GM12878 (cell line): ENCODE measurements at regions of chr10 and their contacts with region 1.

Region 1: GRCh38 chr10:62816331-62817120 is at the start of gene EGR2:
- DNase-seq: peak; percentile 92
- ATAC-seq: peak; percentile 78
- H3K4me3 ChIP-seq: peak within 1 kb of the TSS; percentile 72
- H3K27ac ChIP-seq: peak within 1 kb of the TSS; percentile 72
- H3K4me1 ChIP-seq: peaks cover 19% of the 10 kb centered on the region
- H3K27me3 ChIP-seq: peaks cover 1 to 8% of the 10 kb centered on the region in 2 experiments; a peak in 3 of 4 replicates
- CTCF ChIP-seq: no peak
- EP300 ChIP-seq: peak in 1 of 2 experiments; percentile 56; a peak in 3 of 4 replicates
- POLR2A ChIP-seq: peak; percentile 44
- RAD21 ChIP-seq: no peak
- polyA plus RNA-seq, gene EGR2: 8.3 to 14.0 TPM

Region 2: DNA sequence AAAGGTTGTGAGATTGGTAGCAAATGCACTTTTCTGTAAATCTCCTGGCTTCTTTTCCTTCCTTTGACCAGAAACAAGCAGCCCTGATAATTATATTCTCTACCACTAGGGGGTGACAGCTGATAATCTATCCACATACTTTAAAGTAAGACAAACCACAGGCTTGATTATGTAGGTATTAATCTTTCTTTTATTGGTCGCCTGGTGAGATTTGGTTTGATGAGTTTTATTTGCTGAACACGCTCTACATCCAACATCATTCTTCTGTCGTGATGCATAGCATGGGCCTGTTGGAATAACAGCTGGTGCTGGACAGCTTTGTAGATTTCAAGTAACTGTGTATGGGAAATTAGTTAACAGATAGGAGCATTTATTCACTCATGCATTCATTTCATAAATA is 378.8 kb before region 1 on chr10:
- CTCF ChIA-PET with region 1: interaction called, 9 read pairs
- POLR2A ChIA-PET with region 1: no interaction called
- RAD21 ChIA-PET with region 1: interaction called, 6 read pairs
- SMC1A ChIA-PET with region 1: no interaction called
- in situ Hi-C with region 1: no loop called
- intact Hi-C with region 1: loop called (anchors 5 kb)
- DNase-seq: no peak
- ATAC-seq: peak; percentile 81
- H3K4me3 ChIP-seq: no peak overlapping the region
- H3K27ac ChIP-seq: no peak overlapping the region
- H3K4me1 ChIP-seq: peaks cover 6% of the 10 kb centered on the region; the same call in 1 of the 2 replicates
- H3K27me3 ChIP-seq: no peaks in the 10 kb centered on the region; a peak in 1 of 4 replicates
- CTCF ChIP-seq: peak; percentile 54 to 77 (median 68); a peak in 5 of 6 replicates
- EP300 ChIP-seq: no peak
- POLR2A ChIP-seq: no peak
- RAD21 ChIP-seq: peak; percentile 94

Region 3: GRCh38 chr10:62502995-62503613 is 313.4 kb before region 1 on chr10:
- CTCF ChIA-PET with region 1: no interaction called
- POLR2A ChIA-PET with region 1: no interaction called
- RAD21 ChIA-PET with region 1: no interaction called
- SMC1A ChIA-PET with region 1: no interaction called
- in situ Hi-C with region 1: no loop called
- intact Hi-C with region 1: no loop called
- DNase-seq: no peak
- ATAC-seq: no peak
- H3K4me3 ChIP-seq: no peak overlapping the region
- H3K27ac ChIP-seq: no peak overlapping the region
- H3K4me1 ChIP-seq: no peaks in the 10 kb centered on the region
- H3K27me3 ChIP-seq: peaks cover 2 to 8% of the 10 kb centered on the region in 2 experiments; a peak in 2 of 4 replicates
- CTCF ChIP-seq: no peak
- EP300 ChIP-seq: no peak
- POLR2A ChIP-seq: no peak
- RAD21 ChIP-seq: no peak

Region 4: GRCh38 chr10:62610649-62611229 is 205.8 kb before region 1 on chr10:
- CTCF ChIA-PET with region 1: interaction called, 123 read pairs
- POLR2A ChIA-PET with region 1: interaction called, 12 read pairs
- RAD21 ChIA-PET with region 1: interaction called, 132 read pairs
- SMC1A ChIA-PET with region 1: interaction called, 131 read pairs
- in situ Hi-C with region 1: loop called (anchors 5 kb)
- intact Hi-C with region 1: loop called (anchors 1 kb)
- DNase-seq: no peak
- ATAC-seq: peak; percentile 90
- H3K4me3 ChIP-seq: no peak overlapping the region
- H3K27ac ChIP-seq: no peak overlapping the region
- H3K4me1 ChIP-seq: peaks cover 30% of the 10 kb centered on the region
- H3K27me3 ChIP-seq: no peaks in the 10 kb centered on the region
- CTCF ChIP-seq: peak; percentile 90 to 99 (median 96)
- EP300 ChIP-seq: 0 out of 4 replicates have a peak, but pooled peaks have one; percentile 7 to 30
- POLR2A ChIP-seq: no peak
- RAD21 ChIP-seq: peak; percentile 99

Region 5: DNA sequence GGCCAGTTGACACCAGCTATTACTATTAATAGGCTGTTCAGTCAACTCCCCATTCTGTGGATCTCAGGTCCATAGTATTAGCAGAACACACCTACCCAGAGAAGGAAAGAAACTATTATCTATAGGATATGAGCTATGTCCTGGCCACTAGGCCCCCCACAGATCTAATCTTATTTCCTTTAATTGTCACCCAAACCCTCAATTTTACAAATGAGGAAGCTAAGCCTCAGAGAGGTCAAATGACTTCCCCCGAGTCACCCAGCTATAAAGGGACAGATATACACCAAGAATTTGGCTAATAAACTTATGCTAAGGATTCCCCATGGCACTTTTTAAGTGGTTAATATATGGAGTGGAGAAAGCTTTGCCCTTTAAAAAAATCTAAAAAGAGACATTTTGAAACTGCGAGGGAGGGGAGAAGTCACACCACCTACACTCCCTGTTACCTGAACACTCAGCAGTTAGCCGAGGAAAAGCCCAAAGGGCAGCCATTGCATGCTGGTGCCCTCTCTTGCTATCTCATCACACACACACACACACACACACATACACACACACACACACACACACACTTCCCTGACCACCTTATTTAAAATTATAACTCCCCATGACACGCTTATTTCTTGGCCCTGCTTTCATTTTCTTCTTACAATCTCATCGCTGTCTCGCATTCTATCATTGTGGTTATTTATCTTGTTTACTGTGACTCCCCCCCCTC is 169.0 kb before region 1 on chr10:
- CTCF ChIA-PET with region 1: interaction called, 4 read pairs
- POLR2A ChIA-PET with region 1: interaction called, 3 read pairs
- RAD21 ChIA-PET with region 1: interaction called, 18 read pairs
- SMC1A ChIA-PET with region 1: interaction called, 5 read pairs
- in situ Hi-C with region 1: no loop called
- intact Hi-C with region 1: no loop called
- DNase-seq: no peak
- ATAC-seq: peak; percentile 59
- H3K4me3 ChIP-seq: no peak overlapping the region
- H3K27ac ChIP-seq: no peak overlapping the region
- H3K4me1 ChIP-seq: peaks cover 29% of the 10 kb centered on the region
- H3K27me3 ChIP-seq: no peaks in the 10 kb centered on the region
- CTCF ChIP-seq: no peak
- EP300 ChIP-seq: peak; percentile 29 to 40; a peak in 1 of 4 replicates
- POLR2A ChIP-seq: no peak
- RAD21 ChIP-seq: no peak

Region 6: DNA sequence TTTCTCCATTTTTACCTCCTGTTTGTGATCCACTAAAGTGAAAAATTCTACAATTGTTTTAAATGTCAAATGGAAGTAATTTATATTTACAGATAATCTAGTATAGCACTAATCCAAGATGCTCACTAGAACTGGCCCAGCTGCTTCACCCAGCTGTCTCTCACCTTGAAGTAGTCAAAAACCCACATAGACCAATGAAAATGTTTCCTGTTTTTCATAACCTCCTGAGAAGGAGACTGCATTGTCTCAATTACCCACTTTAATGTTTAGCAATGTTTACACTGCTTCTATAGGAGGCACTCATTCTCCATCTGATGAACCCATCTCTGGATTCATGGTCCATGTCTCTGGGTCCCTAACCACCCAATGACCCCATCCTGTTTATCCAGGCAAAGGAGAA is 68.1 kb before region 1 on chr10:
- CTCF ChIA-PET with region 1: no interaction called
- POLR2A ChIA-PET with region 1: interaction called, 4 read pairs
- RAD21 ChIA-PET with region 1: interaction called, 14 read pairs
- SMC1A ChIA-PET with region 1: interaction called, 5 read pairs
- in situ Hi-C with region 1: no loop called
- intact Hi-C with region 1: no loop called
- DNase-seq: no peak
- ATAC-seq: peak; percentile 45
- H3K4me3 ChIP-seq: no peak overlapping the region
- H3K27ac ChIP-seq: no peak overlapping the region
- H3K4me1 ChIP-seq: peaks cover 13% of the 10 kb centered on the region; the same call in 1 of the 2 replicates
- H3K27me3 ChIP-seq: no peaks in the 10 kb centered on the region
- CTCF ChIP-seq: no peak
- EP300 ChIP-seq: no peak
- POLR2A ChIP-seq: no peak
- RAD21 ChIP-seq: peak; percentile 37; the same call in 1 of the 2 replicates

Region 7: DNA sequence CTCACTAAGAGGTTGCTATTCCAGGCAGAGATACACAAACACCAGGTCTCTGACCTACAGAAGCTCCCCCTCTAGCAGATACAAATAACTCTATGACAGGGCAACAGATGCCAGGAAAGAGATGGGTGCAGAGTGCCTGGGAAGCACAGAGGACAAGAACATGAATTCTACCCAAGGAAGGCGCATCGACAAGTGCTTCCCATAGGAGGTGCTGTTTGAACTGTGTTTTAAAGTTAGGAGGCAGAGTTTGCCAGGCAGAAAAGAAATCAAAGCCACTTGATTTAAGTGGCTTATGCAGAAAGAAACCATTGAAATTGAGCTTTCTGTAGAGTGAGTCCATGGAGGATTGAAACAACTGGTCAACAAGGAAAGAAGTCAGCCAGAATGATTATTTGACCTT is 34.9 kb after region 1 on chr10:
- CTCF ChIA-PET with region 1: interaction called, 3 read pairs
- POLR2A ChIA-PET with region 1: interaction called, 4 read pairs
- RAD21 ChIA-PET with region 1: interaction called, 33 read pairs
- SMC1A ChIA-PET with region 1: interaction called, 5 read pairs
- in situ Hi-C with region 1: no loop called
- intact Hi-C with region 1: loop called (anchors 2 kb)
- DNase-seq: no peak
- ATAC-seq: no peak
- H3K4me3 ChIP-seq: no peak overlapping the region
- H3K27ac ChIP-seq: no peak overlapping the region
- H3K4me1 ChIP-seq: peaks cover 37% of the 10 kb centered on the region
- H3K27me3 ChIP-seq: no peaks in the 10 kb centered on the region
- CTCF ChIP-seq: peak; percentile 7 to 38 (median 27); a peak in 3 of 6 replicates
- EP300 ChIP-seq: no peak
- POLR2A ChIP-seq: no peak
- RAD21 ChIP-seq: peak; percentile 54